Spleen (tissue), 13 donors: ENCODE measurements at regions of chr5 and their contacts with region 1.

Region 1: GRCh38 chr5:110738812-110739651 is at the start of gene SLC25A46:
- DNase-seq: peak; percentile 95
- H3K4me3 ChIP-seq: peak within 1 kb of the TSS; percentile 71 to 94 (median 92)
- H3K27ac ChIP-seq: peak within 1 kb of the TSS; percentile 80 to 97 (median 94)
- H3K4me1 ChIP-seq: peaks cover 15 to 64% (median 37%) of the 10 kb centered on the region in 6 donors
- H3K27me3 ChIP-seq: peaks cover 0 to 5% (median 0%) of the 10 kb centered on the region in 7 donors
- CTCF ChIP-seq: no peak
- POLR2A ChIP-seq: peak in 2 of 3 donors; percentile 73 to 76
- total RNA-seq, gene SLC25A46: 33.4 to 59.7 (median 42.3) TPM

Region 2: DNA sequence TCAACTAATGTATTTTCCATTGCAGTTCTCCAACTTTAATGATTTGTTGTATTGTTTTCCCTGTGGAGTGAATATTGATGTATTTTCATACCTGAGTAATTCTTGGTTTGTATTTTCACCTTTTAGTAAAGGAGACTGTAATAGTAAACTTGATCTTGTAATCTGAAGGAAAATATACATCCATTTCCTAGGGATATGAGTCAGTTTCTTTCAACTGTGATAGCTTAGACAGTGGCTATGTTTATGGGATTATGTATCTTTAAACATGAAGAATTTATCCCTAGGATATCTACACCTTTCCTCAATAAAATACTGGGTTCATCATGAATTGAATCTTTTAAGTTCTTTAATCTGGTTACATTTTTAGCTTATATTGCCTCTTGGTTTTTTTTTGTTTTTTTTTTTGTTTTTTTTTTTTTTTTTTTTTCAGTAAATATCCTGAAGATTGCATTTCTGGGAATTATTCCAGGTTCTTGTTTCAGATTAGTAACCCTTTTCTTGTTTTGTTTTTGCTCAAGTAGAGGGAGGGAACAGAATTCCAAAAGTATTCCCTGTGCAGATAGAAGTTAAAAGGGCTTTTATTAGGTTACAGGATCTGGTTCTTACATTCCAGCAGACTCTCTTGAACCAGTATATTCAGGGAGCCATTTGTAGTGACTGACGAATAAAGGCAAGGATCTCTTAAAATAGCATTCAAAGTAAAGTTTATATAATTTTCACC is 360.2 kb after region 1 on chr5:
- intact Hi-C with region 1: loop called (anchors 5 kb)
- DNase-seq: no peak
- H3K4me3 ChIP-seq: no peak overlapping the region
- H3K27ac ChIP-seq: no peak overlapping the region
- H3K4me1 ChIP-seq: peaks cover 3 to 42% (median 12%) of the 10 kb centered on the region in 6 donors
- H3K27me3 ChIP-seq: no peaks in the 10 kb centered on the region
- CTCF ChIP-seq: no peak
- POLR2A ChIP-seq: no peak